ENCODE measurements at regions of chr12 and their contacts with region 1.

Region 1: DNA sequence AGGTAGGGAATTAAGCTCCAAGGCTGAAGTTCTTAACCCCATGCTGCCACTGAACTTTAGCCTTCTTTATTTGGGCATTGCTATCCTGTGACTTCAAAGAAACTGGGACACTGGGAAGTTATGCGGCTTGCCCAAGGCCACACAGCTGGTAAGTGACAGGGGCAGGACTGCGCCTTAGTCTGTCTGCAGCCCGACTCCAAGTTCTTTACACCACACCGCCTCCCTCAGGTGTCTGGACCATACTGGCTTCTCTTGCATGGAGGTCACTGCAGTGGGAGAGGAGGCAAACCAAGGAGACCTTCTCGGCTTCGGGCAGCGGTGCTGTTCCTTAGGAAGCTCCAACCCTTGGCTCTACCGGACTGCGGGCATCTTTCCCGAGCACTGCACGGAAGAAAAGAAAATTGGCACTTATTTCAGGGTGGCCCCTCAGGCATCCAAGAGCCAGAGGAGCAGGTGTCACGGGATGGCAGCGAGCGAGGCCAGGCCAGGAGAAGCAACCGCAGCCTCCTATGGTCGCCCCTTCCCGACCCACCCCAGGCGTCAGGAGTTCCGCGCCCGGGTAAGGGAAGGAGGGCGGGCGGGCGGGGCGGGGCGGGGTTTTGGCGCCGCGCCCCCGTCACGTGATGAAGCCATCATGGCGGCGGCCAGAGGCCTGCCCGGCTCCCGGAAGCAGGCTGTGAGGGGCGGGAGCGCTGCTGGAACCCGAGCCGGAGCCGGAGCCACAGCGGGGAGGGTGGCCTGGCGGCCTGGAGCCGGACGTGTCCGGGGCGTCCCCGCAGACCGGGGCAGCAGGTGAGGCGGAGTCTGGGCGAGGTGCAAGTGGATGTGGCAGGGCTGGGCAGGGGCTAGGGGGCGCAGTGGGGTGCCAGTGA is 16.4 kb upstream of the ESPL1 start:
- DNase-seq: peak; percentile 60 to 85 (median 72)
- H3K4me3 ChIP-seq: peak overlapping the region; percentile 65 to 97 (median 85)
- H3K27ac ChIP-seq: peak overlapping the region; percentile 65 to 99 (median 94)
- H3K27me3 ChIP-seq: no peaks in the 10 kb centered on the region
- CTCF ChIP-seq: peak in 52 of 56 donors; percentile 11 to 80 (median 58)

Region 2: DNA sequence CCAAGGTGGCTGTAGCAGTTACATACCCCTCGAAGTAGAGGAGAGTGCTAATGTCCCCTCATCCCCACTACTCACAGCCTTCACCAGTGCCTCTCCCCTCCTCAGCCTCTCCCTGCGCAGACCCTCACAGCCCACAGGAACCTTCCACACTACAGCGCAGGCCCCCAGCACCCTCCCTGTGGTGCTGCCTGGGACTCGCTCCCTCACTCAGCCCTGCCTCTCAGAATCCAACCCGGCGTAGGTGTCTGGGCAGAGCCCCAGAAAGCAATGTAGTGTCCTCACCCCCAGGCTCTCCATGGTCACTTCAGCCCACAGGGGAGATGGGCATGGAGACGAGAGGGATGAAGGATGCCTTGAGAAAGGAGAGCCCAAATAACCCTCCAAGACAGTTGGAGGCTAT is 82.1 kb before region 1 on chr12:
- intact Hi-C with region 1: no loop called
- DNase-seq: no peak
- H3K4me3 ChIP-seq: no peak overlapping the region
- H3K27ac ChIP-seq: no peak overlapping the region
- H3K27me3 ChIP-seq: no peaks in the 10 kb centered on the region
- CTCF ChIP-seq: no peak

Region 3: GRCh38 chr12:53180220-53180930 is 71.3 kb before region 1 on chr12 and contains the starts of genes CSAD and ZNF740:
- intact Hi-C with region 1: loop called in 1 of 2 experiments (anchors 2 kb)
- DNase-seq: peak; percentile 92 to 99 (median 98)
- H3K4me3 ChIP-seq: peak within 1 kb of the TSS; percentile 52 to 91 (median 79)
- H3K27ac ChIP-seq: peak within 1 kb of the TSS; percentile 78 to 98 (median 95)
- H3K27me3 ChIP-seq: no peaks in the 10 kb centered on the region
- CTCF ChIP-seq: peak in 15 of 56 donors; percentile 4 to 50 (median 15)
- total RNA-seq, gene CSAD: 28.2 to 90.7 (median 62.4) TPM
- total RNA-seq, gene ZNF740: 29.1 to 79.4 (median 48.6) TPM

Region 4: GRCh38 chr12:53213348-53213747 is 38.4 kb before region 1 on chr12:
- intact Hi-C with region 1: loop called in 1 of 2 experiments (anchors 2 kb)
- DNase-seq: peak; percentile 84 to 92 (median 89)
- H3K4me3 ChIP-seq: peak overlapping the region in 11 of 59 donors; percentile 6 to 46 (median 17)
- H3K27ac ChIP-seq: peak overlapping the region in 22 of 59 donors; percentile 4 to 75 (median 41)
- H3K27me3 ChIP-seq: no peaks in the 10 kb centered on the region
- CTCF ChIP-seq: peak; percentile 75 to 99 (median 97)

Region 5: DNA sequence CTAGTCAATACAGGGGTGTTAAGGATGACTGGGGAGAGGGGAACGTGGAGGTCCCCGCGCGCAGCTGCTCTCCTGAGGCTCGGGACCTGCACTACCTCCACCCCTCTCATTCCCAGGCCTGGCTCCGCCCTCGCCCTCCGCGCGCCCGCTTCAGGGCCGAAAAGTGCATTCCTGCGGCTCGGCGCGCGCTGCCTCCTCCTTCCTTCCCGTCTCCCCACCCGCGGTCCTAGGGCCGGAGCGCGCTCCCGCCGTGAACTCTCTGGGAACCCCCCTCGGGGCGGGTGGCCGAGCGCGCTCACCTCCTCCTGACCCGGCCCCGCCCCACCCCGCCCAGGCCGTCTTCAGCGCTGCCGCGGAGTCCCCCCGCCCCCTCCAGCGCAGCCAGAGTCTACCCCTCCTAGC is 30.9 kb before region 1 on chr12:
- intact Hi-C with region 1: loop called in 1 of 2 experiments (anchors 2 kb)
- DNase-seq: peak in 9 of 10 donors; percentile 40 to 81 (median 68)
- H3K4me3 ChIP-seq: peak overlapping the region; percentile 54 to 87 (median 70)
- H3K27ac ChIP-seq: peak overlapping the region in 56 of 59 donors; percentile 39 to 98 (median 92)
- H3K27me3 ChIP-seq: no peaks in the 10 kb centered on the region
- CTCF ChIP-seq: peak in 2 of 56 donors; percentile 8 to 9

Region 6: DNA sequence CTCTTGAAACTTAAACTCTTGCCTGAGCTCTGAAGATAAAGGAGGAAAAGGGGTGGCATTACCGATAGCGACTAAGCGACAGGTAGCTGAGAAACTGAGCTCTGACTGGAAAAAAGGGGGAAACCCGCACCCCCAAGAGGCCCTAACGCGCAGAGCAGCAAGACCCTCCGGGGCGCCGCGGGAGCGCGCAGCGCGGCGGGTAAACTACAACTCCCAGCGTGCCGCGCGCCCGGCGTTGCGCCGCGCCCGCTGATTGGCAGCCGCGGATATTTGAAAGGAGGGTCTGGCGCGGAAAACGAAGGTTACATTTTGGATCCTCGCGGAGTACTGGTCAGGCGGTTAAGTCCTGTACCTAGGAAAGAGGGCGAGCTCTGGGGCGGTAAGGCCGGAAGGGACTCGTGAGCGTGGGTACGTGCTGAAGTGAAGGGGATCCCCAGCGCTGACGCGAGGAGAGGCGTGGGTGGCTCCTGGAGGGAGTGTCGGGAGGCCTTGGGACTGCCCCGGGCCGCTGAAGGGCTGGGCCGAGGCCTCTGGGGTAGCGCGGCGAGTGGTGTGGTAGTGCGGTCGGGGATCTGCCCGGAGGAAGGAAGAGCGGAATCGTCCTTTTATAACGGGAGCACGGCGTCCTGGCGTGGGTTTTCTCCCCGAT is 16.4 kb after region 1 on chr12 and contains the start of gene ESPL1:
- intact Hi-C with region 1: loop called in 1 of 2 experiments (anchors 2 kb)
- DNase-seq: peak in 9 of 10 donors; percentile 47 to 82 (median 59)
- H3K4me3 ChIP-seq: peak within 1 kb of the TSS; percentile 48 to 87 (median 73)
- H3K27ac ChIP-seq: peak within 1 kb of the TSS in 8 of 59 donors; percentile 8 to 67 (median 37)
- H3K27me3 ChIP-seq: peaks cover 0 to 7% (median 0%) of the 10 kb centered on the region in 45 donors
- CTCF ChIP-seq: peak in 49 of 56 donors; percentile 1 to 63 (median 35)
- total RNA-seq, gene ESPL1: 0.07 to 1.8 (median 0.25) TPM in 63 of 120 experiments, not detected in the others

Region 7: DNA sequence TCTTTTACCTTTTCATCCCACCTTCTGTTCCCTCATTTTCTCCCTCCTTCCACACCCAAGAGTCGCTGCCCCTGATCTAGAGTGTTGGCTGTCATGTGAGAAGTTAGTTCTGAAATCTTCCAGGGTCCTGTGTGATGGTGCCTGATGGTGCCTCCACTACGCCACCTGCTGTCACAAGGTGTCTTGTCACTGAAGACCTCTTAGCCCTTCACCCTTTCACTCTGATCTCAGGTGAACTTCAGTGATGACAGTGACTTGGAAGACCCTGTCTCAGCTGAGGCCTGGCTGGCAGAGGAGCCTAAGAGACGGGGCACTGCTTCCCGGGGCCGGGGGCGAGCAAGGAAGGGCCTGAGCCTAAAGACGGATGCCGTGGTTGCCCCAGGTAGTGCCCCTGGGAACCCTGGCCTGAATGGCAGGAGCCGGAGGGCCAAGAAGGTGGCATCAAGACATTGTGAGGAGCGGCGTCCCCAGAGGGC is 36.1 kb after region 1 on chr12:
- intact Hi-C with region 1: loop called in 1 of 2 experiments (anchors 5 kb)
- DNase-seq: peak in 8 of 10 donors; percentile 32 to 76 (median 56)
- H3K4me3 ChIP-seq: no peak overlapping the region
- H3K27ac ChIP-seq: no peak overlapping the region
- H3K27me3 ChIP-seq: no peaks in the 10 kb centered on the region
- CTCF ChIP-seq: peak; percentile 34 to 91 (median 70)

Region 8: DNA sequence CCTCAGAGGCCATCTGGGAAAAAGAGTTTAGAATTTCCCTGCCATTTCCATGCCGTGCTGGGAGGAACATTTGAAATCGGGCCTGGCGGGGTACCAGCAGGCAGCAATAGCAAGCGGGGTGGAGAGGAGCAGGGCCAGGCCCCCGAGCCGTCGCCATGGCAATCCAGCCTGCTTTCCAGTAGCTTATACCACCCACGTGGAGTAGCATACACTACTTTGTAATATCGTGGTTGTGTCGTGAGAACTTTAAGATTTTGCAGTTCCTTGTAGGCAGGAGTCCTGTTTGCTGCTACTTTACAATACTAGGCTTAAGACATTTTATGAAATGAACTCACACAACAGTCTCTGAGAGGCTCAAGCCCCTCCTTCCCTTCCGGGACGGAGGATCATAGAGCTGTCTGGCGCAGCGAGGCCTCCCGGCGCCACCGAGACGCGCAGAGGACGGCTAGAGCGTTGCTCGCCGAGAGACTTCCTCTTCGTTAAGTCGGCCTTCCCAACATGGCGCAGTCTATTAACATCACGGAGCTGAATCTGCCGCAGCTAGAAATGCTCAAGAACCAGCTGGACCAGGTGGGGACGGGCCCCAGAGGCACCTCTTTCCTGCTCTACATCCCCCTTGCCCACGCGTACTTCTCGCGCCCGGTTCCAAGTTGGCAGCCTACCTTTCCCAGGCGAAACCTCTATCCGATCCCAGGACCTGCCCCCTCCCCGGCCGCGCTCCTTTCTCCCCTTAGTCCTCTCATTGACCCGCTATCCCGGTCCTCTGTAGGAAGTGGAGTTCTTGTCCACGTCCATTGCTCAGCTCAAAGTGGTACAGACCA is 43.6 kb after region 1 on chr12 and contains the start of gene PFDN5:
- intact Hi-C with region 1: loop called in 1 of 2 experiments (anchors 2 kb)
- DNase-seq: peak; percentile 70 to 92 (median 92)
- H3K4me3 ChIP-seq: peak within 1 kb of the TSS; percentile 62 to 99 (median 88)
- H3K27ac ChIP-seq: peak within 1 kb of the TSS; percentile 27 to 96 (median 87)
- H3K27me3 ChIP-seq: no peaks in the 10 kb centered on the region
- CTCF ChIP-seq: peak in 53 of 56 donors; percentile 11 to 65 (median 42)
- total RNA-seq, gene PFDN5: 256 to 374 (median 306) TPM

Region 9: GRCh38 chr12:53726341-53726740 is 474.6 kb after region 1 on chr12:
- intact Hi-C with region 1: no loop called
- DNase-seq: no peak
- H3K4me3 ChIP-seq: peak overlapping the region; percentile 61 to 100 (median 88)
- H3K27ac ChIP-seq: peak overlapping the region in 6 of 59 donors; percentile 63 to 90 (median 86)
- H3K27me3 ChIP-seq: no peaks in the 10 kb centered on the region
- CTCF ChIP-seq: no peak

Measured in dorsolateral prefrontal cortex (tissue), 120 donors.